ENCODE measurements at regions of chr16 and their contacts with region 1.

Region 1: DNA sequence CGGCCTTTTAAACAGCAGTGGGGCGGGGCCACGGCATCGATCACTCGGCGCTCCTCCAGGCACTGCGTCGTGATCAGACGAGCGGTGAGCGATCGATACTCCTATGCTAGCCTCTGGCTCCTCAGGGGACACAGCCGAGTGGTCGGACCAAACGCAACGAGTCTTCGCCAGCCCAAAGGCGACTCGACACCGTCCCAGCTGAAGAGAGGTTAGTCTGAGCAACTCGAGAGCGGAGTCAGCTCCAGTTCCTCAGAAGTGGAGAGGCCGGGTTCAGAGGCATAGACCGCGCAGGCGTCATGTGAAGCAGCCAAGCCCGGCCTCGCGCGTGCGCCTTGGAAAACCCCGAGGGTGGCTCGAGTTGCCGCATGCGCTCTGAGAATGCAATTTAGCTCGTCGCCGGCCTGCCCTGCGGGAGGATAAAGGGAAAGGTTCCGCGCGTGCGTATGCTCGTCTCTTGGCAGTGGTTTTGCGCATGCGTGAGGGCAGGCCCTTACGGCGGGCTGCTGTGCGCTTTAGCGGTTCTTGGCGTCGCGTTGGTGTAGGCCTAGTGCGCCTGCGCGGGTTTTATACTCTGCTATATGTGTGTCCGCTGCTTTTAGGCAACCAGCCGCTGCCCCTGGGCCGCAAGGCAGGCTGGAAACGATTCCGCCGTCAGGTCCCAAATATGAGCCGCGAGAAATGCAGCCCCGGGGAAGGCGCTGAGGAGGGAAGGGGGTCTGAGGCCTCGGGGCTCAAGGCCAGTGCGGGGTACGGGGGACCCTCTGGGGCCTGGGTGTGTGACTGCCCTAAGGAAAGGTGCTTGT is at the start of gene KDM8:
- DNase-seq: peak; percentile 100
- ATAC-seq: peak; percentile 93
- H3K4me3 ChIP-seq: peak within 1 kb of the TSS; percentile 70 to 93 (median 90)
- H3K27ac ChIP-seq: peak within 1 kb of the TSS; percentile 97
- H3K4me1 ChIP-seq: peaks cover 41% of the 10 kb centered on the region
- H3K27me3 ChIP-seq: no peaks in the 10 kb centered on the region; a peak in 1 of 5 replicates
- CTCF ChIP-seq: no peak
- EP300 ChIP-seq: peak in 1 of 2 experiments; percentile 16; a peak in 1 of 4 replicates
- POLR2A ChIP-seq: peak; percentile 92 to 98
- RAD21 ChIP-seq: peak; percentile 76
- total RNA-seq, gene KDM8: 5.2 and 8.6 TPM in 2 replicates

Region 2: GRCh38 chr16:27179500-27180072 is 24.0 kb before region 1 on chr16:
- CTCF ChIA-PET with region 1: no interaction called
- POLR2A ChIA-PET with region 1: interaction called, 14 read pairs
- in situ Hi-C with region 1: no loop called
- intact Hi-C with region 1: no loop called
- DNase-seq: peak; percentile 72
- ATAC-seq: peak; percentile 93
- H3K4me3 ChIP-seq: no peak overlapping the region
- H3K27ac ChIP-seq: no peak overlapping the region
- H3K4me1 ChIP-seq: peaks cover 10% of the 10 kb centered on the region; the same call in 1 of the 2 replicates
- H3K27me3 ChIP-seq: peaks cover 0 to 6% of the 10 kb centered on the region in 2 experiments; a peak in 1 of 5 replicates
- CTCF ChIP-seq: peak; percentile 98
- EP300 ChIP-seq: no peak
- POLR2A ChIP-seq: no peak
- RAD21 ChIP-seq: peak; percentile 85

Region 3: GRCh38 chr16:27189335-27189972 is 14.2 kb before region 1 on chr16:
- CTCF ChIA-PET with region 1: no interaction called
- POLR2A ChIA-PET with region 1: interaction called, 34 read pairs
- in situ Hi-C with region 1: no loop called
- intact Hi-C with region 1: no loop called
- DNase-seq: no peak
- ATAC-seq: peak; percentile 85
- H3K4me3 ChIP-seq: peak overlapping the region in 2 of 3 experiments; percentile 2 to 65; a peak in 2 of 6 replicates
- H3K27ac ChIP-seq: no peak overlapping the region
- H3K4me1 ChIP-seq: peaks cover 14% of the 10 kb centered on the region
- H3K27me3 ChIP-seq: peaks cover 0 to 8% of the 10 kb centered on the region in 2 experiments; a peak in 2 of 5 replicates
- CTCF ChIP-seq: 0 out of 2 replicates have a peak, but pooled peaks have one; percentile 21
- EP300 ChIP-seq: no peak
- POLR2A ChIP-seq: no peak
- RAD21 ChIP-seq: no peak

Region 4: DNA sequence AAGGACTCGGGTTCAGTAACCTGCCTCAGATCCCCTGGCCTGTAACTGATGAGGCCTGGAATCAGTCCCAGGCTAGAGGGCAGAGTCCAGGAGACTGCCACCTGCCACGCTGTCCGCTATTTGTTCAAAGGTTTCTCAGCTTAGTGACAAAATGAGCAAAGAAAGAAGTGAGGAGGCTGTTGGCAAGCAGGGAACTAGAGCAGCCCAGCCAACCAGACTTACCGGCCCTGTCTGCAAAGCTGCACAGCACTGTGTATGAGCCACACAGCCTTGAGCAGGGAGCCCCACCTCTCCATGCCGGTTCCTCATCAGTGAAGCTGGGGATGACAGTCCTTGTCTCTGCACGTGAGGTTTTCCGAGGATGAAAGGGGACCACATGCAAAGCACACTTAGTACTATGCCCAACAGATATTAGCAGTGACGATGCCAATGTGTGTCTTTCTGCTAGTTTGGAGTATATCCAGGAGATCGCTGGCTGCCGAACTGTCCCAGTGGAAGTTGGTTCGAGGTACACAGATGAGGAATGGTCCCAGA is 10.9 kb after region 1 on chr16:
- CTCF ChIA-PET with region 1: no interaction called
- POLR2A ChIA-PET with region 1: interaction called, 24 read pairs
- in situ Hi-C with region 1: no loop called
- intact Hi-C with region 1: no loop called
- DNase-seq: peak; percentile 70
- ATAC-seq: peak; percentile 92
- H3K4me3 ChIP-seq: peak overlapping the region in 1 of 3 experiments; percentile 19; a peak in 1 of 6 replicates
- H3K27ac ChIP-seq: peak overlapping the region; percentile 56
- H3K4me1 ChIP-seq: peaks cover 18% of the 10 kb centered on the region
- H3K27me3 ChIP-seq: no peaks in the 10 kb centered on the region
- CTCF ChIP-seq: peak; percentile 44
- EP300 ChIP-seq: no peak
- POLR2A ChIP-seq: no peak
- RAD21 ChIP-seq: no peak

Region 5: GRCh38 chr16:27222249-27223225 is 18.9 kb after region 1 on chr16:
- CTCF ChIA-PET with region 1: no interaction called
- POLR2A ChIA-PET with region 1: interaction called, 12 read pairs
- in situ Hi-C with region 1: no loop called
- intact Hi-C with region 1: no loop called
- DNase-seq: no peak
- ATAC-seq: peak; percentile 8; the same call in 1 of the 3 replicates
- H3K4me3 ChIP-seq: no peak overlapping the region
- H3K27ac ChIP-seq: no peak overlapping the region
- H3K4me1 ChIP-seq: no peaks in the 10 kb centered on the region
- H3K27me3 ChIP-seq: no peaks in the 10 kb centered on the region
- CTCF ChIP-seq: no peak
- EP300 ChIP-seq: no peak
- POLR2A ChIP-seq: no peak
- RAD21 ChIP-seq: no peak

Region 6: GRCh38 chr16:27273670-27274423 is 70.2 kb after region 1 on chr16:
- CTCF ChIA-PET with region 1: no interaction called
- POLR2A ChIA-PET with region 1: interaction called, 15 read pairs
- in situ Hi-C with region 1: no loop called
- intact Hi-C with region 1: loop called (anchors 2 kb)
- DNase-seq: peak; percentile 100
- ATAC-seq: peak; percentile 98
- H3K4me3 ChIP-seq: peak overlapping the region; percentile 9 to 55 (median 24); a peak in 4 of 6 replicates
- H3K27ac ChIP-seq: peak overlapping the region; percentile 96
- H3K4me1 ChIP-seq: peaks cover 62% of the 10 kb centered on the region
- H3K27me3 ChIP-seq: no peaks in the 10 kb centered on the region
- CTCF ChIP-seq: peak; percentile 40; the same call in 1 of the 2 replicates
- EP300 ChIP-seq: peak; percentile 97 to 98
- POLR2A ChIP-seq: peak in 1 of 2 experiments; percentile 43; a peak in 1 of 4 replicates
- RAD21 ChIP-seq: peak; percentile 81

Region 7: DNA sequence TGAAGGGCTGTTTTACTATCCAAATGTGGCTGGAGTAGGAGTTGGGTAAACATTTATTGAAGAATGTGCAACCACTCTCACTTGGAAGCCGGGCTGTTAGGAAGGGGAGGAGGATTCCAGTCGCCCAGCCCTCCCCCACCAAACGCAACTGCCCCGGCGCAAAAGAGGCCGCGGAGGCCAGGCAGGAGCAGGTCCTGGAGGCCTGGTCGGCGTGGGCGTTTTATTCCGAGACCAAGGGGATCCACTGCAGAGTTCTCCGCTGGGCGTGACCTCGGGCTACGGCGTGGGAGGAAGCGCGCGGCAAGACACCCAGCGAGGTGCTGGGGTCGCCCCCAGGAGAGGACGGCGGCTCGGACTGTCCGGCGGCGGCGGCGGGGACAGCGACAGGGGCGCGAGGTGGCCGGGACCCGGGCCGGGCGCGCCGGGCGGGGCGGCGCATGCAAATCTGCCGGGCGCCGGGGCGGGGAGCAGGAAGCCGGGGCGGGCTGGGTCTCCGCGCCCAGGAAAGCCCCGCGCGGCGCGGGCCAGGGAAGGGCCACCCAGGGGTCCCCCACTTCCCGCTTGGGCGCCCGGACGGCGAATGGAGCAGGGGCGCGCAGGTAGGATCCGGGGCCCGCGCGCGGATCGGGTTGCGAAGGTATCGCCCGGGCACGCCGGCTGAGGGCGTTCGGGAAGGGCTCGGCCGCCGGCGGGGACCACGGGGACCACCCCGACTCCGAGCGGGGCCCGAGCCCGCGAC is 110.0 kb after region 1 on chr16 and contains the start of gene IL4R:
- CTCF ChIA-PET with region 1: no interaction called
- POLR2A ChIA-PET with region 1: interaction called, 13 read pairs
- in situ Hi-C with region 1: no loop called
- intact Hi-C with region 1: no loop called
- DNase-seq: peak; percentile 94
- ATAC-seq: peak; percentile 84
- H3K4me3 ChIP-seq: peak within 1 kb of the TSS; percentile 88 to 99 (median 97)
- H3K27ac ChIP-seq: peak within 1 kb of the TSS; percentile 75
- H3K4me1 ChIP-seq: peaks cover 74% of the 10 kb centered on the region
- H3K27me3 ChIP-seq: peaks cover 1 to 17% of the 10 kb centered on the region in 2 experiments; a peak in 3 of 5 replicates
- CTCF ChIP-seq: no peak
- EP300 ChIP-seq: peak in 1 of 2 experiments; percentile 32; a peak in 1 of 4 replicates
- POLR2A ChIP-seq: peak; percentile 63 to 91
- RAD21 ChIP-seq: peak; percentile 23
- total RNA-seq, gene IL4R: 7.6 and 15.9 TPM in 2 replicates

Region 8: DNA sequence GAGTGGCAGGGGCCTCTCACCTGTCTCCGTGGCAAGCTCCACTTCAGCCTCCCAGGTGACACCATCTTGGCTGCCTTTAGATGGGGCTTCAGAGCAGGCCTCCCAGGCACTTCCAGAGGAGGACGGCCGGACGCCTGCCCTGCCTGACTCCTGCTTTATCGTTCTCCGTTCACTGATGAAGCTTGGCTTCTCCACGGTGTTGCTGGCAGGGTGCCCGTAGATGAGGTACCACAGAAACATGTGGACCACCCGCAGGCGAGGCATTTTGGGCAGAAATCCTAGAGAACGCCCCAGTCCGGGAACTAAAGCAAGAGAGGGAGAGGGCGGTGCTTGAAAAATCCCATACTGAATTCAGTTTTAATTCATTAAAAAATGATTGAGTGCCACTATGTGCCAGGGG is 291.6 kb after region 1 on chr16:
- CTCF ChIA-PET with region 1: no interaction called
- POLR2A ChIA-PET with region 1: no interaction called
- in situ Hi-C with region 1: no loop called
- intact Hi-C with region 1: no loop called
- DNase-seq: no peak
- ATAC-seq: no peak
- H3K4me3 ChIP-seq: no peak overlapping the region
- H3K27ac ChIP-seq: no peak overlapping the region
- H3K4me1 ChIP-seq: no peaks in the 10 kb centered on the region
- H3K27me3 ChIP-seq: no peaks in the 10 kb centered on the region
- CTCF ChIP-seq: no peak
- EP300 ChIP-seq: no peak
- POLR2A ChIP-seq: no peak
- RAD21 ChIP-seq: no peak

Measured in HepG2 (cell line).